HEK293T (cell line): ENCODE measurements at regions of chr18 and their contacts with region 1.

Region 1: GRCh38 chr18:3409811-3410210 is 40.2 kb upstream of the TGIF1 start:
- DNase-seq: no peak

Region 2: GRCh38 chr18:3447895-3448837 is 38.4 kb after region 1 on chr18:
- CTCF ChIA-PET with region 1: no interaction called
- POLR2A ChIA-PET with region 1: interaction called, 10 read pairs
- DNase-seq: peak; percentile 59